ENCODE measurements at regions of chr16 and their contacts with region 1.

Region 1: GRCh38 chr16:27048315-27048714 is 18.4 kb upstream of the C16orf82 start:
- DNase-seq: no peak

Region 2: DNA sequence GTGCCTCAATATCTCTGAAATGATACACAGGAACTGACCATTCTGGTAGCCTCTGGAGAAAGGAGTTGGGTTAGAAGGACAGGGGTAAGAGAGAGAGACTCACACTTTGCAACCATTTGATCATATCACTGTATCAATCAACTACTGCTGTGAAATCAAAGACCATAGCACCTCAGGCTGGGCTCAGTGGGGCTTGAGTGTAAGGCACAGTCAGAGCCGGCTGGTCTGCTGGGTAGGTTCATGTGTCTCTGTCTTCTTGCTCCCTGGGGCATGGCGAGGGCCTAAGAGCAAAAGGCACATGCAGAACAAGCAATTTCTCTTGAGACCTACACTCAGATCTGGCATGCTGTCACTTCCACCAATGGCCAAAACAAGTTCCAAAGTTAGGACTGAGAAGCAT is 28.3 kb before region 1 on chr16:
- intact Hi-C with region 1: loop called in 1 of 2 experiments (anchors 1 kb)
- DNase-seq: no peak